Left cardiac atrium (tissue), 4 donors: ENCODE measurements at regions of chr11 and their contacts with region 1.

Region 1: GRCh38 chr11:64723117-64723906 is at the start of gene NRXN2:
- DNase-seq: peak; percentile 90
- ATAC-seq: peak; percentile 98
- total RNA-seq, gene NRXN2: 3.9 to 4.0 TPM

Region 2: DNA sequence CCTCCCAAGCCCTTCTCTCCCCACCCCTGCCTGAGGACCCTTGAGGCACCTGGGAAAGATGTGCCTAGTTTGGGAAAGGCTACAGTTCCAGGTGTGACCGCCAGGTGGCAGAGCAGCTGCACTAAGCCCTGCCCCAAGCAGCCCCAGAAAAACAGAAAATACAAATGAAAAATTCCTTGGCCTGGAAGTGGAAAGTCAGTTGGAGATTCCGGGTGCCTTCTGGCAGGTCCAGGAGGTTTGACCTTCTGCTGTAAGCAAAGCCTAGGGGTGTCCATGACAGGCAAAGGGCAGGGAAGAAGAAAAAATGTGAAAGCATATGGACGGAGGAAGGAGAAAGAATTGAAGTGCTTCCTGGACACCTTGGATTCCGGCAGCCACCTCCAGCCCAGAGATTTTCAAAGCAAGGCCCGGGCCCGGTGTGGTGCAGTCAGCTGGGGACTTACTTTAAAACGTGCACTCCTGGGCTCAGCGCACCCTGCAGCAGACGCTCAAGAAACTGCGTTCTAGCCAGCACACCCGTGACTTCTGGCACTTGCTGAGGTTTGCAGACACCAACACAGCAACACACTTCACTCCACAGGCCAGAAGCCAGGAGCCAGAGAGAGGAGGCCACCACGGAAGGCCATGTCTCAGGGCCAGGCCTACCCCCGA is 169.6 kb before region 1 on chr11:
- intact Hi-C with region 1: loop called in 1 of 2 experiments (anchors 2 kb)
- DNase-seq: peak; percentile 69
- ATAC-seq: peak; percentile 53 to 75

Region 3: DNA sequence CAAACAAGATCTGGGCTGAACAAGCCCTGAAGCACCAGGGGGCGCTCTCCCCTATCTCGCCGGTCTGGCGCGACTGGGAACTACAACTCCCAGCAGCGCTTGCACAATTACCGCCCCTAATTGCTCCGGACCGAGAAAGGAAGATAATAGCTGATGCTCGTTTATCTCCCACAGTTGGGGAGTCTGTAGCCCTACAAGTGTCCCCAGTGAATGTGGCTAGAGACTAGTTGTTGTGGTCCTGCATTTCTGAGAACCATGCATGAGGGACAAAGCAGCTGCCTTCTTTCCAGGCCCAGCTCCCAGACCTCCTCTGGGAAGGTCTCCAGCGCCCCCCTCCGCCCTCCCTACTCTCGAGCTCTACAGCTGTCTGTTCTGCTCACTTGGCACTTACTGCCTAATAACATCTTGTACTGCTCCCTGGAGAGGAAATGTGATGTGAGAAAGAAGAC is 34.8 kb before region 1 on chr11:
- intact Hi-C with region 1: loop called (anchors 5 kb)
- DNase-seq: peak; percentile 92
- ATAC-seq: peak; percentile 91 to 95

Region 4: DNA sequence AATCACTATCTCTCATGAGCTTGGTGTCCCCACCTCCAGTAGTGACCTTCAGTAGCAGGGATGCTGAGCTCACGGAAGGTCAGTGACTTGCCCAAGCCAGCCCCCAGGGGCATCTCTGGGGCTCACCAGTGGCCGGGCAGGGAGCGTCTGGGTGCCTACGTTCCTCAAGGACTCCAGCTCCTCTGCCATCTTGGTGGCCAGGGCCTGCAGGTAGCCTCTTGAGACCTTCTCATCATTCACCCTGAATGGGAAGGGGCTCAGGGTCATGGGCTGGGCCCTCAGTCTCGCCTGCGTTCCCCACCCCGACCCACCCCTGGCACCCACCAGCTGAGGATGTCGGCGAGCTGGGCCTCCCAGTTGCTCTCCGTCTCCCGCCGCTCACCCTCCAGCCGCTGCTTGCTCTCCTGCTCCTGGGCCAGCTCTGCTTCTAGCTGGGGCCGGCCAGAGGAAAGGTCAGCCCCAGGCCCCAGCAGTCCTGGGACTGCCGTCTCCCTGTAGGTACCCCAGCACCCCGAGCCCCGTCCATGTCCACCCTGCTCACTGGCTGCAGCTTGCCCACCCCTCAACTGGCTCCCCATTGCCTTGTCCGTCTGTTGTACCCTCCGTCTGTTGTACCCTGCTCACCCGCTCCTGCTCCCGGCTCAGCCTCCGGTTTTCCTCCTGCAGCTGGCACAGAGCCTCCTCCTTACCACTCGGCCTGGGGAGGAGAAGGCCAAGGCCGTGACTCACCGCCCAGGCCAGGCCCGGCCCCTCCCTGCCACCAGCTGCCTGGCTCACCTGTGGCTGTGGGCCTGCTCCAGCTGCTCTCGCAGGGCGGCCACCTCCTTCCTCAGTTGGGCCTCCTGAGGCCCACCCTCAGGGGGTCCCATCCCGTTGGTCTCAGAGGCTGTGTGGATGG is 111.7 kb after region 1 on chr11:
- intact Hi-C with region 1: no loop called
- DNase-seq: peak; percentile 50
- ATAC-seq: peak; percentile 21 to 83